ENCODE measurements at regions of chrX and their contacts with region 1.

Region 1: DNA sequence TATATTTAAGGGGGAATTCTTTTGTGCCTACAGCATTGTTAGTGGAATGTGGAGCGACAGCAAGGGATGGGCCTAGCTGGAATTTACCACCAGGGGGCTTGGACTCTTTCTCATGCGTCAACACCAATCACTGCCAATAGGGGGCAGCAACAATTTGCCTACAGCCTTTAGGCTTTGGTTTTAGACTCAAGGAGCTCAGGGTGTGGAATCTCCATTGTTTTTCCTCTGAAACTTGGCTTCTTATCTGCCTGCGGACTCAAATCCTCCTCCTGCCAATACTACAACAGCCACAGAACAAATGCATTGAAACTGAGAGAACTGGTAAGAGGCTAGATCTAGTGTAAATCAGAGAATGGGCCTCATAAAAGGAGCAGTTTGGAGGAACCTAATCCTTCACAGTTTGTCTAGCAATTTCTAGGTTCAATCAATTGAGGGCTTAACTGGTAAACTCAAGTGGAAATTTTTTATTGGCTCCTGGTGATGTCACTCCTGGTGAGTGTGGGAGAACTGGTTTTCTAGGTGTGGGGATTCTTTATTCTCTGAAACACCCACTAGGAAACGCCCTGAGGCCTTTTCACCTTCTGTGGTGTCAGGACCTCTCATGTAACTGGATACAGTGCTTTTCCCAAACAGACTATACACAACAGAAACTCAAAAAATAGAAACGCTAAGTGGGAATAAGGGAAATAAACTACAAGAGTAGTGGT is 27.9 kb upstream of the TMSB4X start:
- DNase-seq: peak; percentile 80
- ATAC-seq: no peak
- H3K4me3 Mint-ChIP-seq: peak overlapping the region; percentile 55
- H3K27ac Mint-ChIP-seq: peak overlapping the region; percentile 90
- H3K4me1 Mint-ChIP-seq: peaks cover 52% of the 10 kb centered on the region
- H3K27me3 Mint-ChIP-seq: no peaks in the 10 kb centered on the region

Region 2: DNA sequence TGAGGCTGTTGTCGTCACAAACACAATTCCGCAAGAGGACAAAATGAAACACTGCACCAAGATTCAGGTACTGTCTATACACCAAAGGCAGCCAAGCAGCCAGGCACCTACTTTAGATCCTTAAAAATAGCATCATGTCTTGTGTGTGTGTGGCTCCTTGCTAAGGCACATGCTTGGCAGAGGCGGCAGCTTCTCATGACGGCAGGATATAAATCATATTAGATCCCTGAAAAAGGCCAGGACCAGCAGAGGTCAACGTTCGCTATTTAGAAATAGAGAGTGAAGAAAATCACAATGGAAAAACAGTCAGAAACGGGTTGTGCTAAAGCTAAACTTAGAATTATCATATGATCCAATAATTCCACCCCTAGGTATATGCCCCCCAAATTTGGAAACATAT is 126.3 kb before region 1 on chrX:
- CTCF ChIA-PET with region 1: no interaction called
- DNase-seq: no peak
- ATAC-seq: no peak
- H3K4me3 Mint-ChIP-seq: no peak overlapping the region
- H3K27ac Mint-ChIP-seq: no peak overlapping the region
- H3K4me1 Mint-ChIP-seq: no peaks in the 10 kb centered on the region
- H3K27me3 Mint-ChIP-seq: no peaks in the 10 kb centered on the region

Region 3: DNA sequence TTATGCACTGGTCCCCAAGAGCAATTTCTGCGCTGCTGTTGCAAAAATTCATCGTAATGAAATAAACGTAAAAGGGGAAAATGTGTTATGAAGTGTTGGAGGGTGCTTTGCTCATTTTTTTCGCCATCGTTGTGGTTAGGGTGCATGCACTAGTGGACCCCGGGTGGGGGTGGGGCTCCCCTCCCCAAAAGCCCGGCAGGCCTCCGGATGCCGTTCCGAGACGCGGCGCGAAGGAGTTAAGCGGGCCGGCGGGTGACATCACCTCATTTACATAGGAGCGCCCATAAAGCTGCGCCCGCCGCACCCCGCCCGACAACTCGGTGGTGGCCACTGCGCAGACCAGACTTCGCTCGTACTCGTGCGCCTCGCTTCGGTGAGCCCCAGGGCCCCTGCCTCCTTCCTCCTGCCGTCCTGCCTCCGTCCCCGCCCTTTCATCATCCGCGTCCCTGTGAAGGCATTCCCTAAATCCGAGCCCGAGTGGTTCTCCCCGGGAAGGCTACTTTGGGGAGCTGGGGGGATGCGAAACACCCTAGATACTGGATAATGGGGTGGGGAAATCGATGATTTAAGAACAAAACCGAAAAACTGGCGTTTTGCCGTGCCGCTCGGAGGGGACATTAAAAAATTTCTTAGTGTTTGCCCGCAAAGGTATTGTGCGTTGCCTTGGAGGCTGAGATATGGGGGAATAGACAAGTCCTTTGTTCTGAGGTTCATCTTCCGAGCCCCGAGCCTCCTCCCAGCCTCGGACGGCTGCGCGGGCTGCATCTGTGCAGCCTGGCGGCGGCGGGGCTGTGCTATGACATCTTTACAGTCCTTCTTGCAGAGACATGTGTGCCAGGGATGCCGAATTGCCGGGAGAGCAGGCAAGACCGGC is 28.0 kb after region 1 on chrX and contains the start of gene TMSB4X:
- CTCF ChIA-PET with region 1: interaction called, 206 read pairs
- DNase-seq: peak; percentile 90
- ATAC-seq: peak; percentile 62
- H3K4me3 Mint-ChIP-seq: peak within 1 kb of the TSS; percentile 95
- H3K27ac Mint-ChIP-seq: peak within 1 kb of the TSS; percentile 98
- H3K4me1 Mint-ChIP-seq: peaks cover 34% of the 10 kb centered on the region
- H3K27me3 Mint-ChIP-seq: no peaks in the 10 kb centered on the region
- total RNA-seq, gene TMSB4X: 6,072 to 7,639 TPM

Region 4: GRCh38 chrX:13077168-13077567 is 130.2 kb after region 1 on chrX:
- CTCF ChIA-PET with region 1: interaction called, 167 read pairs
- DNase-seq: peak; percentile 60
- ATAC-seq: peak; percentile 44
- H3K4me3 Mint-ChIP-seq: no peak overlapping the region
- H3K27ac Mint-ChIP-seq: peak overlapping the region; percentile 85
- H3K4me1 Mint-ChIP-seq: peaks cover 70% of the 10 kb centered on the region
- H3K27me3 Mint-ChIP-seq: no peaks in the 10 kb centered on the region

Region 5: DNA sequence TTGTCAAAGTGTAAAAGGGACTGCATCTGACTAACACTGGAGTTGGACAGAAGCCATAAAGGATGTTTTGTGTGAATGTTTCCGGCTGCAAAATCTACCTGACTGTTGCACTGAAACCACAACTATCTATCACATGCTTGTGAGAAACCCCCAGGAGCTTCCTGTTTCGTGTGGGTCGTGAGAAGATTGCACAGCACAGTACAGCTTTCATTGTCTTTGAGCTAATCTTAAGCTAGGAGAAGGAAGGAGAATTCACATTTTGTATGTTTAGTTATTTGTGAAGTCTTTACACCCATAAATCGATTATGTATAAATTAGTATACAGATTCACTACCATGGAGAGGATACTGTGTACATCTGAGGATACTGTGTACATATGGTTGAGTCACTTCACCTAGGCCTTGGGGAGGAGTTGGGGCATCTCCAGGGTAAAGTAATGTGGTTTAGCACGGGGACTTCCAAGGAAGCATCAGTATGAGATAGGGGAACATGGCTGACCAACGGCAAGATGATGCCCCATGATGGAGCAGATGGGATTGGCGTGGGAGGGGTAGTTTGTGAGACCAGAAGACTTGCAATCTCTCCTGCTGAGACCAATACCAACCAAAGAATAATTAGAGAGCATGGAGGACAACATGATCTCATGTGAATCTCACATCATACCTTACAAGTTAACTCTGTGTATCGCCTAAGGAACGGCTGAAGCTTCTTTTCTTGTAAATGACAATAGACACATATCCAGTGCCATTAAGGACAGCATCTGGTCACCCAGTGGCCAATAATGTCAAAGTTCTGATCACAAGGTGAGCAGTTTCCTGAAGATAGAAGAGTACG is 140.5 kb after region 1 on chrX:
- CTCF ChIA-PET with region 1: interaction called, 167 read pairs
- DNase-seq: peak; percentile 81
- ATAC-seq: peak; percentile 54
- H3K4me3 Mint-ChIP-seq: peak overlapping the region; percentile 75
- H3K27ac Mint-ChIP-seq: peak overlapping the region; percentile 96
- H3K4me1 Mint-ChIP-seq: peaks cover 78% of the 10 kb centered on the region
- H3K27me3 Mint-ChIP-seq: no peaks in the 10 kb centered on the region

Region 6: DNA sequence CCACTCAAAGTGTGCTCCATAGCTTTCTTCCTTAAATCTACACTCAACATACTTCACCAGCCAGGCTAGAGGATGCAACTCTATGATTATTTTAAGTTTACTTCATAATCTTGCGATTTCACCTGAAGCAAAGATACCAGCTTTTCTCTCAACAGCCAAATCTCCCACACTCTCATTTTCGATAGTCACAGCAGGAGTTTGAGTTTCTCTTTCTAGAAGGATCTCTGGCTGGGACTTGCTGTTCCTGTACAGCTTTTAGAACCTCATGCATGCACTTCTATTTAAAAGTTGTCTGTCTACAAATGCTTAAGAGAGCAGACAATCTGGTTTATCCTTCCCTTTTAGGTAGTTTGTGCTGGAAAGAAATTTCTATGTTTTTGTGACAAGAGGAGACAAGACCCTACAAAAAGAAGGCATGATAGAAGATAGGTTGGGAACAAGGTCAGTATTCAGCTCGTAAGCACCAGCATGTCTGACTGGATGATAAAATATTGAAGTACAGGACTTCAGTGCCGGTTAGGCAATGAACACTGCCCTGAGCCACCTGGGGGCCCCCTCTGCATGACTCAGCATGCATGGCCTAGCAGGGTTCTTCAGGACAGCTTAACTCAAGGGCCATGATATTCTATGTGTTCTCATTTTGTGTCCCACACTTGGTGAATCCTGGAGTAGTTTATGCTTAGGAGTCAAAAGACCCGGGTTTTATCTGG is 307.2 kb after region 1 on chrX:
- CTCF ChIA-PET with region 1: interaction called, 13 read pairs
- DNase-seq: peak; percentile 43
- ATAC-seq: peak; percentile 70
- H3K4me3 Mint-ChIP-seq: no peak overlapping the region
- H3K27ac Mint-ChIP-seq: peak overlapping the region; percentile 68
- H3K4me1 Mint-ChIP-seq: peaks cover 43% of the 10 kb centered on the region
- H3K27me3 Mint-ChIP-seq: no peaks in the 10 kb centered on the region

Region 7: GRCh38 chrX:13487731-13488523 is 540.9 kb after region 1 on chrX:
- CTCF ChIA-PET with region 1: interaction called, 65 read pairs
- DNase-seq: peak; percentile 52
- ATAC-seq: peak; percentile 80
- H3K4me3 Mint-ChIP-seq: no peak overlapping the region
- H3K27ac Mint-ChIP-seq: peak overlapping the region; percentile 79
- H3K4me1 Mint-ChIP-seq: peaks cover 20% of the 10 kb centered on the region
- H3K27me3 Mint-ChIP-seq: no peaks in the 10 kb centered on the region

Measured in activated CD8-positive, alpha-beta memory T cell treated with anti-CD3 and anti-CD28 coated beads, Interleukin-2, amount 10 ng/mL, durations not matched to agents 7 days and 5 days (primary cell).